AG04450 (cell line): ENCODE measurements at regions of chr7 and their contacts with region 1.

Region 1: GRCh38 chr7:141654551-141654950 is 47.4 kb downstream of the DENND11 start:
- DNase-seq: peak; percentile 33
- H3K4me3 ChIP-seq: no peak overlapping the region
- H3K27ac ChIP-seq: no peak overlapping the region
- H3K27me3 ChIP-seq: no peaks in the 10 kb centered on the region
- CTCF ChIP-seq: peak; percentile 84

Region 2: DNA sequence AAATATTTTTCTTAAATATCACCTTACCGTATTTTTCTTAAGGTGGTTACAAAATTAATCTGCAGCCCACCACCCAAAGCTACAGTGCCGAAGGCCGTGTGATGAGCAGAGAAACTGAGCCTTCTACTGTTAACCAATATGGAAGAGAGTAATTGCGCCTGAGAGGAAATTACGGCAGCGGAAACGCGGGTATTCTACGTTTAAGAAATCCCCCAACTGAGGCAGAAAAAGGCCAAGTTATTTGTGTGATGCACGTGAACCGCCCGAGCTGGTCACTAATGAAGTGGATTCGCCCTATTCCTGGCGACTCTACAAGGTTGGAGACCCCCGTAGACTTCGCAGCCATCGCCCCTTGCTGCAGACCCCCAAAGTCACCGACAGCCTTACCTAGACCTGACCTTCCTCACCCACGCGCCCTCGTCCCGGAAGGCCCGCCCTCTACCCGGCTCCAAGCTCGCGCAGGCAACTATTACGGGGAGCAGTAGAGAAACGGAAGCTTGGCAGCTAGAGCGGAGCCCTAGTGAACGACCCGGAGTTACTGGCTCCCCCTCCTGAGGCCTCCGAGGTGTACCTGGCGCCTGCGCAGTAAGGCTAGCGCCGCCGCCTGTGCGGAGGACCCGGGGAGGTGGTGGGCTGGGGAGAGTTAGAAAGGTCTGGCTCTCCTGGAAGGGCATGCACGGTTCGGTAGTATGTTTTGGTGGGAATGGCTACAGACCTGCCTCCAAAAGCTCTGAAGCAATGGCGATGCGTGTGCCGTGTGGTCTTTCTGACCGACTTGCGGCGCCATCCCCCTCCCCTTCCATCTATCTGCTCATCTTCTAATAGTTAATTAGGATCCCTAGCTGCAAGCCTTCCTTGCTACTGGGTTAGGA is 639.8 kb before region 1 on chr7 and contains the start of gene MRPS33:
- CTCF ChIA-PET with region 1: interaction called, 13 read pairs
- POLR2A ChIA-PET with region 1: interaction called, 4 read pairs
- DNase-seq: peak; percentile 90
- H3K4me3 ChIP-seq: peak within 1 kb of the TSS; percentile 88
- H3K27ac ChIP-seq: peak within 1 kb of the TSS; percentile 77
- H3K27me3 ChIP-seq: no peaks in the 10 kb centered on the region
- CTCF ChIP-seq: peak; percentile 35
- polyA plus RNA-seq, gene MRPS33: 80.1 and 99.2 TPM in 2 replicates

Region 3: GRCh38 chr7:141551094-141551781 is 103.3 kb before region 1 on chr7 and contains the start of gene AGK:
- CTCF ChIA-PET with region 1: interaction called, 12 read pairs
- POLR2A ChIA-PET with region 1: interaction called, 5 read pairs
- DNase-seq: peak; percentile 36
- H3K4me3 ChIP-seq: peak within 1 kb of the TSS; percentile 92
- H3K27ac ChIP-seq: peak within 1 kb of the TSS; percentile 61
- H3K27me3 ChIP-seq: no peaks in the 10 kb centered on the region
- CTCF ChIP-seq: no peak
- polyA plus RNA-seq, gene AGK: 39.0 and 42.5 TPM in 2 replicates

Region 4: GRCh38 chr7:141634065-141634464 is 20.5 kb before region 1 on chr7:
- CTCF ChIA-PET with region 1: interaction called, 20 read pairs
- POLR2A ChIA-PET with region 1: no interaction called
- DNase-seq: no peak
- H3K4me3 ChIP-seq: no peak overlapping the region
- H3K27ac ChIP-seq: no peak overlapping the region
- H3K27me3 ChIP-seq: no peaks in the 10 kb centered on the region
- CTCF ChIP-seq: no peak

Region 5: GRCh38 chr7:141641876-141642275 is 12.7 kb before region 1 on chr7:
- CTCF ChIA-PET with region 1: interaction called, 20 read pairs
- POLR2A ChIA-PET with region 1: no interaction called
- DNase-seq: no peak
- H3K4me3 ChIP-seq: no peak overlapping the region
- H3K27ac ChIP-seq: no peak overlapping the region
- H3K27me3 ChIP-seq: no peaks in the 10 kb centered on the region
- CTCF ChIP-seq: no peak

Region 6: GRCh38 chr7:141737834-141738591 is 83.5 kb after region 1 on chr7 and contains the start of gene SSBP1:
- CTCF ChIA-PET with region 1: interaction called, 32 read pairs
- POLR2A ChIA-PET with region 1: no interaction called
- DNase-seq: peak; percentile 93
- H3K4me3 ChIP-seq: peak within 1 kb of the TSS; percentile 99
- H3K27ac ChIP-seq: peak within 1 kb of the TSS; percentile 81
- H3K27me3 ChIP-seq: no peaks in the 10 kb centered on the region
- CTCF ChIP-seq: peak; percentile 74
- polyA plus RNA-seq, gene SSBP1: 152 and 212 TPM in 2 replicates

Region 7: DNA sequence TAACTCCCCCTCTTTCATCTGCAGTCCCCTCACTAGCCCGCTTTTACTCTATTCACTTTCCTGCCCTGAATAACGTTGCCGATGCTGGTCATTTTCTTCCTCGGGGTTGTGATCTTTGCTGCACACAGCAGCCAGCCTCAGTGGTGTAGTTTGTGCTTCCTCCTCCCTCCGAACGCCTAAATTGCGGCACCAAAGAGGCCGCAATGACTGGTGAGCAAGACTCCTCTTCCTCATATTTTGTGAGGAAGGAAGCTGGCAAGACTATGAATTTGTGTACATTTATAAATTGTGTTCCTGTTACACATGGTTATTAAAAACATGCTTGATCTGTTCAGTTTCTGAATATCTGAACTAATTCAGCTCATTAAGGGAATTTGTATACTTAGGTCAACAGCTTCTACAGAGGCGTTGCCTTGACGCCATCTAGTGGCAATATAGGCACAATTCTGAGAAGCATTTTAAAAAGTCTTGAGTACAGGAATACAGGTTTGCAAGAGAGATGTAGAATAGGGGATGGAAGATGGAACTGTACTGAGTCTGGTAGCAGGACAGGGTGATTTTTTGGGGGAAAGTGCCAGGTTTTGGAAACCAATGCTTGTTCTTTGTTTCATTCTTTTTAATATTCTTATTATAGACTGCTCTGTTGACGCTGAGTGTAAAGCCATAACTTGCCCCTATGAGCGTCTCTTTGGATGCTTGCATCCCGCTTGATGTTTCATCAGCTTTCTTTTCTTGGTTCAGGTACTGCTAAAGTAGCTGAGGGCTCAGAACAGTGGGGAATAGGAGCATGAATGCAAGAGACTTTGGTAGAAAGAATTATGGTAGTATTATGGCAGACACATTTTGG is 131.4 kb after region 1 on chr7:
- CTCF ChIA-PET with region 1: interaction called, 51 read pairs
- POLR2A ChIA-PET with region 1: no interaction called
- DNase-seq: peak; percentile 16
- H3K4me3 ChIP-seq: no peak overlapping the region
- H3K27ac ChIP-seq: no peak overlapping the region
- H3K27me3 ChIP-seq: no peaks in the 10 kb centered on the region
- CTCF ChIP-seq: peak; percentile 85

Region 8: DNA sequence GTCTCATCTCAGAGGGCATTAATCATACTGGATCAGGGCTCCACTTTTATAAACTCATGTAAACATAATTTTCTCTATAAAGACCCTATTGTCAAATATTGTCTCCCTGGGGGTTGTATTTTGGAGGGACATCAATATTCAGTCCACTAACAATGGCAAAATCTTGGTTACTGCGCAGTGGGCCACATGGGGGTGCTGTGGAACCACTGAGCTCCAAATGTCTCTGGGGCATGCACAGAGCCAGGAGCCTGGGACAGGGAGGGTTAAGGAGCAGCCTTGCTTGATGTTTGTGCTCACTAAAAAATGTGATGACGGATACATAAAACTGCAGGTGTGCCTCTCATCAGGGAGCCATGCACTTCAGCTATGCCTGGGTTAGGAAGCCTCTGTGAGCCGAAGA is 665.4 kb after region 1 on chr7:
- CTCF ChIA-PET with region 1: no interaction called
- POLR2A ChIA-PET with region 1: no interaction called
- DNase-seq: no peak
- H3K4me3 ChIP-seq: no peak overlapping the region
- H3K27ac ChIP-seq: no peak overlapping the region
- H3K27me3 ChIP-seq: no peaks in the 10 kb centered on the region
- CTCF ChIP-seq: no peak; the same call in 1 of the 2 replicates